Left cardiac atrium (tissue), 4 donors: ENCODE measurements at regions of chr12 and their contacts with region 1.

Region 1: DNA sequence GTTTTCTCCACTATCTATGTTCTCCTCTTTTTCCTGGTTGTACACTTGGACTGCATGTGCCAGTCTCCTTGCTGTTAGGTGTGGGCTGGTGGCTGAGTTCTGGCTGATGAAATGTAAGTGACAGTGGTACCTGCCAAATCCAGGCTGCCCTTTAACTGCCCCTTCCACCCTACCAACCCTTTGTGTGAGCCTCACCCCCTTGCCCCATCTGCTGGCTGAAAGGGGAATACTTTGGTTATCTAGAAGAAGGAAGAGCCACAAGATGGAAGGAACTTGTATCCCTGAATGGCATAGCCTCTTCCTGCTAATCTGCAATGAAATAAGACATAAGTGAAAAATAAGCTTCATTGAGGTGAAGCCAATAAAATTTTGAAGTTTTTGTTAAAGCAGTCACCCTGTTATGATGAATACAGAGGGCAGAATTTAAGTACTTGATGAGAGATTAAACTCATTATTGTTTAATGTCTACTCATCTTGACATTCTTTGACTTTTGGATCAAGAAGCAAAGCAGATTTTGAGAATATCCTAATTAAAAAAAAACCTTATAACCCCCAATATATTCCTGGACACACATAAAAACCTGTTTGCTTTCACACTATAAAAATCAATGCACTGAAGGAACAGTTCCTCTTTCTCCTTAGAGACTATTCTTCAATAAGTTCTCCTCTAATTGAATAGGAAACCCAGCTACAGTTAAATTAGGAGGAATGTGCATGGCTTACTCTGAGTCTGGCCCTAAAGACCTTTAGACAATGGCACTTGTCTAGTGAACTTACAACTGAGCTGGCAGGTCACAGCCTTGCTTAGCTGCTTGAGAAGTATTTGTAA is 262.6 kb upstream of the BTG1 start:
- DNase-seq: peak; percentile 52
- ATAC-seq: peak; percentile 81 to 89

Region 2: GRCh38 chr12:92244036-92244435 is 164.2 kb before region 1 on chr12:
- intact Hi-C with region 1: loop called in 1 of 2 experiments (anchors 10 kb)
- DNase-seq: peak; percentile 19
- ATAC-seq: peak; percentile 86 to 88

Region 3: DNA sequence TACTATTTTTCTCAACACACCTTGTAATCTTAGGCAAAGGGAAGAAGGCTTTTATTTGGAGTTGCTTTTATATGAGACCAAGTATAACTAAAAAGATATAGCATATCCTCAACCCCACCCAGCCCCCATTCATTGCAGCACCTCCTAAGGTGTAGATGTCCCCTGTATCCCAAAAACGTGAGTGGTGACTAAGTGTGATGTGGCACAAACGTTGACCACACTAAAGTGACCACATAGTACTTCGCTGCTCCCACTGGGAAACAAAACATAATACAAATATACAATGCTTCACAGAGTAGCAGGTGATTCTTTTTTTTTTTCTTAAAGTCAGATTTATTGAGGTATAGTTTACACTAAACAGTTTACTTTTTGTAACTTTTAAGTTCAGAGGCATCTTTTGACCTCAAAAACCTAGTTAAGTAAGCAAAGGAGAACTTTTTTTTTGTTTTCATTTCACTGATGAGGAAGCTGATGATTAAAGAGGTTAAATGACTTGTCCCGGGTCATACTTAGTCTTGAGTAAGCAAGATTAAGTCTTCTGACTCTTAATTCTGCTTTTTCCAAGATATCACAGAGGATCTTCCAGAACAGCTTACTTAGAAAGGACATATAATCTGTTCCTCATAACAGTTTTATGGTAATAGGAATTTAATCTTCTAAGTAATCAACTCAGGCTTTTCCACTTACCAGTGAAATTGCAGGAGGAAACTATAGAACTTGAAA is 49.3 kb after region 1 on chr12:
- intact Hi-C with region 1: no loop called
- DNase-seq: no peak
- ATAC-seq: no peak